Aorta (tissue), 5 donors: ENCODE measurements at regions of chr3 and their contacts with region 1.

Region 1: GRCh38 chr3:123652346-123652984 is 67.6 kb upstream of the HACD2 start:
- DNase-seq: peak; percentile 85 to 93
- ATAC-seq: peak; percentile 91
- H3K4me3 ChIP-seq: no peak overlapping the region
- H3K27ac ChIP-seq: peak overlapping the region in 1 of 2 donors; percentile 19
- H3K4me1 ChIP-seq: peaks cover 0 to 6% of the 10 kb centered on the region in 2 donors
- H3K27me3 ChIP-seq: no peaks in the 10 kb centered on the region

Region 2: DNA sequence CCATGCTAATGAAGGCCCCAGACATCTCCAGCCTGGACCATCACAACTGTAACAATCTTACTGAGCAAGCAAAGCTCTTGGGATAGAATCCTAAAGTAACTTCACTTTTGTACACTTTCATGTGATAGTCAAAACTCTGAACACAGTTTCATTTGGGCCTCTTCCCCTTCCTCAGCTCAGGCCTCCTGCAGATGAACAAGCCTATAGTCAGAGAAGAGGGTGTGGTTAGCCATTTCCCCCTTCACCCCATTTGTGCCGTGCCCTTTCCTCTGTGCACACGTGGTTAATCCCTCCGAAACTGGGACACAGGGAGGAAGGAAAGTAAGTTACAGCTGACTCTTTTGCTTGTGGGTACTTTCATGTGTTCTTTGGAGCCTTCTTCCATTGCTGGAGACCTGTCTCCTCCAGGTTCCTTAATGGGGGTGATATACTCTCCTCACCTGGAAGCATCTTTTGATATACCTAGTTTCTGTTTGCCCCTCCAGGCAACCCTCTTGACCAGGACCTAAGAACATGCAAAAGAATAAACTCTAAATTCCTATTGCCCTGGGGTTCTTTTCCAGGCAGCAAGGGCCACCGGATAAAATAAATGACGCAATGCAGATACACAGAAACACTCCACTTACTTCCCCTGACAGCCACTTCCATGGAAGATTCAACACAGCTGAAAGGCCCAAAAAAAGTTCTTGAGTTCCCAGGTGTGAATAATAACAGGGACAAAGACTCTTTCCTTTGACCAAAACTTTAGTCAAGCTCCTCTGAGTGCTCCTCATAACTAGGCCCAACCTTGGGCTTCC is 1357.0 kb before region 1 on chr3:
- intact Hi-C with region 1: no loop called
- DNase-seq: no peak
- ATAC-seq: no peak
- H3K4me3 ChIP-seq: no peak overlapping the region
- H3K27ac ChIP-seq: no peak overlapping the region
- H3K4me1 ChIP-seq: no peaks in the 10 kb centered on the region
- H3K27me3 ChIP-seq: no peaks in the 10 kb centered on the region

Region 3: GRCh38 chr3:123700791-123701722 is 48.6 kb after region 1 on chr3:
- intact Hi-C with region 1: loop called (anchors 2 to 5 kb)
- DNase-seq: peak; percentile 74 to 83
- ATAC-seq: peak; percentile 78
- H3K4me3 ChIP-seq: peak overlapping the region; percentile 79 to 85
- H3K27ac ChIP-seq: peak overlapping the region; percentile 30 to 85
- H3K4me1 ChIP-seq: no peaks in the 10 kb centered on the region
- H3K27me3 ChIP-seq: no peaks in the 10 kb centered on the region

Region 4: DNA sequence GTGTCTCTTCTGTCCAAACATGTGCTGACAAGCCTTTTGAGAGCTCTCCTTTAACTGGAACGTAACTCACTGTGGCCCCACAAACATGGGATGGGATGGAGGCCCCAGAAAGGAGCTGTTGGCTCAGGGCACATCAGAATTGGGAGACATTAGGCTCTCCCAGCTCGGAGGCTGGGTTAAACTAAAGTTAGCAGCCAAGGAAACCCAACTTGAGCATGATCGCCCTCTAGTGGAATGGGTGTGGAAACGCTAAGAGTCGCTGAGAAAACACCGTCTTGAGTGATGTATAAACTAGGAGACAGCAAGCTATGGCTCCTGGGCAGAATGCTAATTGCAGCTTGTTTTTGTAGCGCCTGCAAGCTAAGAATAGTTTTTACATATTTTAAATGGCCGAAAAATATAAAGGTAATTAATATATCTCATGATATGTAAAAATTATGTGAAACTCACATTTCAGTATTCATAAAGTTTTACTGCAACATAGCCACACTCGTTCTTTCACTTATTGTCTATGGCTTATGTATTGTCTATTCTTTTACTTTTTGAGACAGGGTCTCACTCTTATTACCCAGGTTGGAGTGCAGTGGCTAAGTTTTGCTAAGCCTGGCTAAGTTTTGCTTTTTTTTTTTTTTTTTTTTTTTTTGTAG is 71.2 kb after region 1 on chr3:
- intact Hi-C with region 1: loop called (anchors 2 to 5 kb)
- DNase-seq: no peak
- ATAC-seq: no peak
- H3K4me3 ChIP-seq: no peak overlapping the region
- H3K27ac ChIP-seq: peak overlapping the region in 1 of 2 donors; percentile 7
- H3K4me1 ChIP-seq: peaks cover 0 to 2% of the 10 kb centered on the region in 2 donors
- H3K27me3 ChIP-seq: no peaks in the 10 kb centered on the region

Region 5: GRCh38 chr3:123876858-123877257 is 224.4 kb after region 1 on chr3:
- intact Hi-C with region 1: loop called in 1 of 2 experiments (anchors 10 kb)
- DNase-seq: no peak
- ATAC-seq: no peak
- H3K4me3 ChIP-seq: no peak overlapping the region
- H3K27ac ChIP-seq: peak overlapping the region; percentile 23 to 46
- H3K4me1 ChIP-seq: peaks cover 4% of the 10 kb centered on the region in 2 donors
- H3K27me3 ChIP-seq: no peaks in the 10 kb centered on the region